A673 (cell line): ENCODE measurements at regions of chr14 and their contacts with region 1.

Region 1: DNA sequence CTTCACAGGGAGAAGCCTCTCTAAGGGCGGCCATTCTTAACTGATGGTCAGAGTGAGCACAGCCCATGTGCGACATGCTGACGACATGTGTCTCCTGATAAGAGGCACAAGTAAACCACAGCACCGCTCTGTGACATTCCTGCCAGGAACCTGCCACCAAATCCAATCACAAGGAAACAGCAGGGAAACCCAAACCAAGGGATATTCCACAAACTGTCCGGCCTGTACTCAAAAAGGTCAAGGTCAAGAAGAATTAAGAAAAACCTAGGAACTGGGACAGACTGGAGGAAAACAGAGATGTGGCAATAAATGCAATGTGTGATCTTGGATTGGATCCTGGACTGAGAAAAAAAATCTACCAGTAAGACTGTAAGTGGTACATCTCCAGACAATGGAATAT is 91.9 kb downstream of the SYNE3 start:
- DNase-seq: no peak
- H3K4me3 ChIP-seq: no peak overlapping the region
- H3K27ac ChIP-seq: no peak overlapping the region
- H3K4me1 ChIP-seq: no peaks in the 10 kb centered on the region
- H3K27me3 ChIP-seq: no peaks in the 10 kb centered on the region
- CTCF ChIP-seq: no peak

Region 2: GRCh38 chr14:94582851-94583250 is 841.7 kb before region 1 on chr14:
- CTCF ChIA-PET with region 1: no interaction called
- POLR2A ChIA-PET with region 1: interaction called, 13 read pairs
- intact Hi-C with region 1: no loop called
- DNase-seq: no peak
- H3K4me3 ChIP-seq: no peak overlapping the region
- H3K27ac ChIP-seq: no peak overlapping the region
- H3K4me1 ChIP-seq: no peaks in the 10 kb centered on the region
- H3K27me3 ChIP-seq: no peaks in the 10 kb centered on the region
- CTCF ChIP-seq: no peak

Region 3: DNA sequence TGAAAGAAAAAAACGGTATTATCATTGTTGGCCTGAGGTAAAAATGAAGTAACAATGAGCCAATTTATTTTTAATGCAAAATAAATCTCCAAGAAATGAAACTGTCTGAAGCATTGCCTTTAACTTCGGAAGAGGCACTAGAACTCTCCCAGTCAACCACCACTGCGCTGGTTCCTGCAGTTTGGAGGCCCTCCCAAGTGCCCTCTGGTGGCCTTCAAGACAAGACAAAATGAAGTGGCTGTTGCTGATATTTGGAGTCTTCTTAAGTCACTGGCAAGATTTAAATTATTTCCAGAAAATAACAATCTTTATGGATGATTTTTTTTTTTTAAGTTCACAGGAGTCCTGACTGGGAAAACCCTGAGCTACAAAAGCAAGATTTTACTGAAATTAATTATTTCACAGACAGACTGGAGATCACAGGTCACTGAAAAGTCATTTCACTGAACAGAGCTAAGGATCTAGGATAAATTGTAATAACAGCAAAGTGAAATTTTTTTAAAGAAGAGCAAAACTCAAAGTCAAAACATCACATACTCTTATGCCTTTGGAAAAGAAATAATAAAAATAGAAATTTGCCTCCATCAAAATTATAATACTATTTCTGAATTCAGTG is 325.4 kb before region 1 on chr14:
- CTCF ChIA-PET with region 1: no interaction called
- POLR2A ChIA-PET with region 1: no interaction called
- intact Hi-C with region 1: loop called (anchors 10 kb)
- DNase-seq: peak; percentile 86
- H3K4me3 ChIP-seq: no peak overlapping the region
- H3K27ac ChIP-seq: no peak overlapping the region
- H3K4me1 ChIP-seq: peaks cover 52% of the 10 kb centered on the region
- H3K27me3 ChIP-seq: no peaks in the 10 kb centered on the region
- CTCF ChIP-seq: peak; percentile 89